ENCODE measurements at regions of chr19 and their contacts with region 1.

Region 1: GRCh38 chr19:3626473-3627350 is at the start of gene CACTIN:
- DNase-seq: peak; percentile 97 to 100 (median 99)
- ATAC-seq: peak; percentile 99
- H3K4me3 ChIP-seq: peak within 1 kb of the TSS; percentile 73
- H3K4me3 Mint-ChIP-seq: peak within 1 kb of the TSS; percentile 85 to 98 (median 94)
- H3K27ac ChIP-seq: peak within 1 kb of the TSS; percentile 81
- H3K27ac Mint-ChIP-seq: peak within 1 kb of the TSS; percentile 94 to 100 (median 99)
- H3K4me1 ChIP-seq: peaks cover 8 to 16% of the 10 kb centered on the region in 2 donors
- H3K4me1 Mint-ChIP-seq: peaks cover 23 to 43% (median 27%) of the 10 kb centered on the region in 7 donors
- H3K27me3 ChIP-seq: no peaks in the 10 kb centered on the region
- H3K27me3 Mint-ChIP-seq: no peaks in the 10 kb centered on the region
- total RNA-seq, gene CACTIN: 35.4 to 46.7 (median 37.1) TPM

Region 2: DNA sequence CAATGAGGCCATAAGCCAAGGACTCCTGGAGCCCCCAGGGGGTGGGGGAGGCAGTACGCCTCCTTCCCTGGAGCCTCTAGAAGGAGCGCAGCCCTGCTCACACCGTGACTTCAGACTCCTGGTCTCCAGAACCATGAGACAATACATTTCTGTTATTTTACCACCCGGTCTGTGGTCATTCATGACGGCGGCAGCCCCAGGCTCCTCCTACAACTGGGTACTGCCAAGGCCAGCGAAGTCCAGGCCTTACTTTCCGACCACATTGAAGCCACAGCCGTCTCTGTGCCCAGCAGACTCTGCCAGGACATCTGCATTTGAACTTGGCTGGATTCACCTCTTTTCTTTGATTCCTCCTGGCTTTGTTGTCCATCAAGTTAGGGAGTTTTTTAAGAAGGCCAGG is 934.8 kb before region 1 on chr19:
- CTCF ChIA-PET with region 1: no interaction called
- POLR2A ChIA-PET with region 1: no interaction called
- intact Hi-C with region 1: no loop called
- DNase-seq: no peak
- ATAC-seq: no peak
- H3K4me3 ChIP-seq: no peak overlapping the region
- H3K4me3 Mint-ChIP-seq: no peak overlapping the region
- H3K27ac ChIP-seq: no peak overlapping the region
- H3K27ac Mint-ChIP-seq: no peak overlapping the region
- H3K4me1 ChIP-seq: no peaks in the 10 kb centered on the region
- H3K4me1 Mint-ChIP-seq: peaks cover 0 to 11% (median 7%) of the 10 kb centered on the region in 7 donors
- H3K27me3 ChIP-seq: no peaks in the 10 kb centered on the region
- H3K27me3 Mint-ChIP-seq: no peaks in the 10 kb centered on the region

Region 3: DNA sequence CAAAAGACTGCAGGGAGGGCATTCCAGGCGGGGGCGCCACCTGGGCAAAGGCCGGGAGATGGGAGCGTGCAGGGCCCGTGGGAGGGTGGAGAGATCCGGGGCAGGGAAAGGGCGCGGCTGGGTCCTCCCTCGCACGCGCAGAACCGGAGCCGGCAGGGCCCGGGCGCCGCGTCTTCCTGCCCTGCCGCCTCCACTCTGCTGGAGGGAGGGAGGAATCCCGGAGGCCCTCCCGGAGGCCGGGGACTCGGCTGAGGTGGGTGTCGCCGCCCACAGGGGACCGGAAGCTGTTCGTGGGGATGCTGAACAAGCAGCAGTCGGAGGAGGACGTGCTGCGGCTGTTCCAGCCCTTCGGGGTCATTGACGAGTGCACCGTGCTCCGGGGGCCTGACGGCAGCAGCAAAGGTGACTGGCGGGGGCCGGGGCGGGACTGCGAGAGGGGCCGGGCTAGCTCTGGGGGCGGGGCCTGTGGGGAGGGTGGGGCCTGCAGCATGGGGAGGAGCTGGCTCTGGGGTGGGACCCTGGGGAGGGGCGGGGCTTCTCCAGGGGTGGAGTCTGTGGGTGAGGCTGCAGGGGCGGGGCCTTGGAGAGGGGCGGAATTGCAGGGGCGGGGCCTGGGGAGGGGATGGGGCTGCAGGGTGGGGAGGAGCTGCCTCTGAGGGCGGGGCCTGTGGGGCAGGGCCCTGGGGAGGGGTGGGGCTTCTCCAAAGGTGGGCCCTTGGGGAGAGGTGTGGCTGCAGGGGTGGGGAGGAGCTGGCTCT is 350.9 kb before region 1 on chr19:
- CTCF ChIA-PET with region 1: no interaction called
- POLR2A ChIA-PET with region 1: no interaction called
- intact Hi-C with region 1: loop called in 1 of 2 experiments (anchors 2 kb)
- DNase-seq: peak; percentile 78 to 96 (median 91)
- ATAC-seq: peak; percentile 89
- H3K4me3 ChIP-seq: peak overlapping the region; percentile 74
- H3K4me3 Mint-ChIP-seq: peak overlapping the region; percentile 82 to 92 (median 86)
- H3K27ac ChIP-seq: peak overlapping the region; percentile 62
- H3K27ac Mint-ChIP-seq: peak overlapping the region in 8 of 9 donors; percentile 32 to 89 (median 84)
- H3K4me1 ChIP-seq: peaks cover 8 to 16% of the 10 kb centered on the region in 2 donors
- H3K4me1 Mint-ChIP-seq: peaks cover 8 to 22% (median 14%) of the 10 kb centered on the region in 7 donors
- H3K27me3 ChIP-seq: no peaks in the 10 kb centered on the region
- H3K27me3 Mint-ChIP-seq: peaks cover 7 to 16% (median 12%) of the 10 kb centered on the region in 5 donors

Region 4: GRCh38 chr19:3500429-3501130 is 126.1 kb before region 1 on chr19 and contains the start of gene DOHH:
- CTCF ChIA-PET with region 1: no interaction called
- POLR2A ChIA-PET with region 1: no interaction called
- intact Hi-C with region 1: no loop called
- DNase-seq: peak; percentile 81 to 97 (median 94)
- ATAC-seq: peak; percentile 94
- H3K4me3 ChIP-seq: peak within 1 kb of the TSS; percentile 72
- H3K4me3 Mint-ChIP-seq: peak within 1 kb of the TSS; percentile 81 to 96 (median 93)
- H3K27ac ChIP-seq: peak within 1 kb of the TSS; percentile 82
- H3K27ac Mint-ChIP-seq: peak within 1 kb of the TSS; percentile 91 to 98 (median 96)
- H3K4me1 ChIP-seq: peaks cover 12 to 25% of the 10 kb centered on the region in 2 donors
- H3K4me1 Mint-ChIP-seq: peaks cover 13 to 41% (median 31%) of the 10 kb centered on the region in 7 donors
- H3K27me3 ChIP-seq: no peaks in the 10 kb centered on the region
- H3K27me3 Mint-ChIP-seq: peaks cover 0 to 5% (median 0%) of the 10 kb centered on the region in 5 donors
- total RNA-seq, gene DOHH: 4.4 to 16.4 (median 8.0) TPM

Region 5: DNA sequence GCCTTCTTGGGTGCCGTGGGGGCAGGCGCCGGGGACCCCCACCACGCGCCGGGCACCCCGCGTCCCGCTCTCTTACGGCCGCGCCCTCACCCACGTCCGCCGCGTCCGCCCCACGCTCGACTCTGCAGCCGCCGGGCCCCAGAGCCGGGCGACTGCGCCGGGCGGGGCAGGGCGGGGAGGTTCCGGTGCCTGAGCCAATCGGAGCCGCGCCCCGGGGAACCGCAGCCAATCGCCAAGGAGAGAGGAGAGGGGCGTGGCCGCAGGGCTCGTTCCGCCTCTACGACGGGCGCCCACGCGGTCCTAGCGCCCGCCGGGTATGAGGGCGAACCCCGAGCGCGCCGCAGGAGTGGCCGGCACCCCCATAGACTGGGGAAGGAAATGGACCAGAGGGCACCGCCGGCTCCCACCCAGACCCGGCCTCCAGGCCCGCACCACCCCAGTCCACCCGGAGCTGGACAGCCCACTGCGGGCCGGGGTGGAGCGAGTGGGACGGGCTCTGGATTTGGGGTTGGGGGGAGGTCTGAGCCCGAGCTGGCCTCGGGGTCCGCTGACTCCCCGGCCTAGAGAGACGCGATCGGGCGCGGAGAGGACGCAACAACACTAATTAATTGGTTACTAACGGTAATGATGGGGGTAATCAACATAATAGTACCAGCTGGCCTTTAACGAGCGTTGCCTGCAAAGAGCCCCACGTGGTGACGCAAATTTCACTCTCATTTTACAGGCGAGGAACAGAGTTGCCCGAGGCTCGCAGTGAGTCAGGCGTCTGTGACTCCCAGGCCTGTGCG is 69.1 kb before region 1 on chr19 and contains the start of gene MFSD12:
- CTCF ChIA-PET with region 1: no interaction called
- POLR2A ChIA-PET with region 1: interaction called, 4 read pairs
- intact Hi-C with region 1: loop called (anchors 1 kb)
- DNase-seq: peak; percentile 88 to 98 (median 93)
- ATAC-seq: peak; percentile 94
- H3K4me3 ChIP-seq: peak within 1 kb of the TSS; percentile 90
- H3K4me3 Mint-ChIP-seq: peak within 1 kb of the TSS; percentile 92 to 100 (median 96)
- H3K27ac ChIP-seq: peak within 1 kb of the TSS; percentile 83
- H3K27ac Mint-ChIP-seq: peak within 1 kb of the TSS; percentile 92 to 97 (median 95)
- H3K4me1 ChIP-seq: peaks cover 25 to 30% of the 10 kb centered on the region in 2 donors
- H3K4me1 Mint-ChIP-seq: peaks cover 18 to 40% (median 38%) of the 10 kb centered on the region in 7 donors
- H3K27me3 ChIP-seq: no peaks in the 10 kb centered on the region
- H3K27me3 Mint-ChIP-seq: no peaks in the 10 kb centered on the region
- total RNA-seq, gene MFSD12: 95.2 to 153 (median 101) TPM

Region 6: GRCh38 chr19:3586124-3586626 is 40.5 kb before region 1 on chr19:
- CTCF ChIA-PET with region 1: no interaction called
- POLR2A ChIA-PET with region 1: no interaction called
- intact Hi-C with region 1: loop called in 1 of 2 experiments (anchors 2 kb)
- DNase-seq: peak in 6 of 9 donors; percentile 26 to 59 (median 45)
- ATAC-seq: peak; percentile 51
- H3K4me3 ChIP-seq: peak overlapping the region; percentile 54
- H3K4me3 Mint-ChIP-seq: peak overlapping the region in 8 of 10 donors; percentile 27 to 74 (median 68)
- H3K27ac ChIP-seq: peak overlapping the region; percentile 31
- H3K27ac Mint-ChIP-seq: no peak overlapping the region
- H3K4me1 ChIP-seq: peaks cover 0 to 6% of the 10 kb centered on the region in 2 donors
- H3K4me1 Mint-ChIP-seq: no peaks in the 10 kb centered on the region
- H3K27me3 ChIP-seq: no peaks in the 10 kb centered on the region
- H3K27me3 Mint-ChIP-seq: peaks cover 0 to 6% (median 0%) of the 10 kb centered on the region in 5 donors

Region 7: DNA sequence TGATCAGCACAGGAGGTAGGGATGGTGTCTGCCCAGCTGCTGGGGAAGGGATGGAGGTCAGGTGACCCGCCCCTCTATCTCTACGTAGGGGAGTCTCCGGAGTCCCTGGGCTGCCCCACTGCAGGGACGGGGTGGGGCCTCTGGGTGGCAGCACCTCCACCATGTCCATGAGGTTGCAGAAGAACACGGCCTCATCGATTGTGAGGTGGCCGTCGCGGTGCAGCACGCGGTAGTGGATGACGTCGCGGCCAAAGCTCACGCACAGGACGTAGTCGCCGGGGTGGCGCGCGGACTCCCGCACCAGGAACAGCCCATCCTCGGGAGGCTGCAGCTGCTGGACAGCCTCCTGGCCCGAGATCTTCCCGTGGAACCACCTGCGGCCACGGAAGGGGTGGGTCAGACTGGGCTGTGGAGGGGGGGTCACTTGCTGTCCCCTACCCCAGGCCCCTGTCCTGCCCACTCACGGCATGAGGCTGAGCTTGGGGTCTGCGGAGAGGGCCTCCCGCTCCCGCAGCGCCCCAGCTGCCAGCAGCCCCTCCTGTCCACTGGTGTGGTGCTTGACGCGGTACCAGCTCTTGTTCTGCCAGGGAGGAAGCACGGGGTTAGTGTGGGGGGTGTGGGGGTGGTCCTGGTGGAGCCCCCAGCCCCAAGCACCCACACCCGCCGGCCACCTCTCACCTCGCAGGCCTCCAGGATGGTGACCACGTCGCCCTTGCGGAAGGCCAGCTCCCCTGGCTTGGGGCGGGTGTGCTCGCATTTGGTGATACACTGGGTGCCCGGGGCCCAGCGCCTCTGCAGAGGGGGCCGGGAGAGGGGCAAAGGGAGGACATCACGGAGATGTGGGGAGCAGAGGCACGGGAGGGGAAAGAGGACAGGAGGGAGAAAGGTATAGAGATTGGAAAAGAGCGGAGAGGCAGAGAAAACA is 157.2 kb after region 1 on chr19:
- CTCF ChIA-PET with region 1: no interaction called
- POLR2A ChIA-PET with region 1: no interaction called
- intact Hi-C with region 1: no loop called
- DNase-seq: peak in 5 of 9 donors; percentile 31 to 43 (median 38)
- ATAC-seq: peak; percentile 66
- H3K4me3 ChIP-seq: no peak overlapping the region
- H3K4me3 Mint-ChIP-seq: peak overlapping the region; percentile 23 to 88 (median 82)
- H3K27ac ChIP-seq: no peak overlapping the region
- H3K27ac Mint-ChIP-seq: peak overlapping the region in 1 of 9 donors; percentile 50
- H3K4me1 ChIP-seq: no peaks in the 10 kb centered on the region
- H3K4me1 Mint-ChIP-seq: peaks cover 0 to 18% (median 8%) of the 10 kb centered on the region in 7 donors
- H3K27me3 ChIP-seq: no peaks in the 10 kb centered on the region
- H3K27me3 Mint-ChIP-seq: peaks cover 0 to 18% (median 0%) of the 10 kb centered on the region in 5 donors

Region 8: GRCh38 chr19:4007021-4007835 is 380.5 kb after region 1 on chr19 and contains the start of gene PIAS4:
- CTCF ChIA-PET with region 1: no interaction called
- POLR2A ChIA-PET with region 1: no interaction called
- intact Hi-C with region 1: loop called in 1 of 2 experiments (anchors 1 kb)
- DNase-seq: peak; percentile 93 to 97 (median 96)
- ATAC-seq: peak; percentile 95
- H3K4me3 ChIP-seq: peak within 1 kb of the TSS; percentile 76
- H3K4me3 Mint-ChIP-seq: peak within 1 kb of the TSS; percentile 82 to 93 (median 88)
- H3K27ac ChIP-seq: peak within 1 kb of the TSS; percentile 75
- H3K27ac Mint-ChIP-seq: peak within 1 kb of the TSS; percentile 31 to 93 (median 85)
- H3K4me1 ChIP-seq: peaks cover 26 to 27% of the 10 kb centered on the region in 2 donors
- H3K4me1 Mint-ChIP-seq: peaks cover 13 to 33% (median 23%) of the 10 kb centered on the region in 7 donors
- H3K27me3 ChIP-seq: no peaks in the 10 kb centered on the region
- H3K27me3 Mint-ChIP-seq: no peaks in the 10 kb centered on the region
- total RNA-seq, gene PIAS4: 23.9 to 40.6 (median 28.8) TPM

Region 9: DNA sequence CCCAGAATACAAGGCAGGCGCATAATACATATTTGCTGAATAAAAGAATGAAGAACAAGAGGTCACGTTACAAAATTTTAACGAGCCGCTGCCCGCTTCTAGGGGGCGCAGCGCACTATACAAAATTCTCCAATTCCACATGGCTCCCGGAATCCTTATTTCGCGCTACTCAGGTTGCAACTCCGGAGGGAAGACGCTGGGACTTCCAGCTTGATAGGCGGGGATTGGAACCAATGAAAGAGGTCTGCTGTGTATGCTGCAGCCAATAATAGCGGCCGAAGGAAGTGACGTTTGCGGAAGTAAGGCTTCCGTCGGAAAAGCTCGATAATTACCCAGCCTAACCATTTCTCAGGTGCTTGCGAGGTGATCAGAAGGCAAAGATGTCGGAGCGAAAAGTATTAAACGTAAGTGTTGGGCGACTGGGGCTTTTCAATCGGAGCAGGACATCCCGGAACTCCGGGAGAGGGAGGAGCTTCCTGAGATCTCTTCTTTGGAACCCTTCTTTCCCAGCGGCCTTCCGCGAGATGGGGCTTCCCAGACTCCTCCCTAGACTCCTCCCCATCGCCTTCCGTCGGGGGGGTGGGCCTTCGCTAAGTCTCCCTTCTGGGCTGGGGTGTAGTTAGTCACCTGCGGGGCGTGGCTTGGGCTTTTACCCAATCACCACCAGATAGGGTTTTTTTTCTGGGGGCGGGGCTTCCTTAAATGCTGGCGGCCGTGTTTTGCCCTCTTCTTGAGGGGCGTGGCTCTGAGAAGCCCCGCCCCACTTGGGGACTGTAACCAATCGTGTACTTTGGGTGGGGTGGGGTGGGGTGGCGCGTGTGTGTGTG is 620.3 kb after region 1 on chr19 and contains the start of gene YJU2:
- CTCF ChIA-PET with region 1: no interaction called
- POLR2A ChIA-PET with region 1: no interaction called
- intact Hi-C with region 1: loop called in 1 of 2 experiments (anchors 1 kb)
- DNase-seq: peak; percentile 92 to 100 (median 99)
- ATAC-seq: peak; percentile 96
- H3K4me3 ChIP-seq: peak within 1 kb of the TSS; percentile 100
- H3K4me3 Mint-ChIP-seq: peak within 1 kb of the TSS; percentile 85 to 98 (median 96)
- H3K27ac ChIP-seq: peak within 1 kb of the TSS; percentile 99
- H3K27ac Mint-ChIP-seq: peak within 1 kb of the TSS; percentile 97 to 100 (median 99)
- H3K4me1 ChIP-seq: peaks cover 12 to 13% of the 10 kb centered on the region in 2 donors
- H3K4me1 Mint-ChIP-seq: peaks cover 10 to 33% (median 24%) of the 10 kb centered on the region in 7 donors
- H3K27me3 ChIP-seq: no peaks in the 10 kb centered on the region
- H3K27me3 Mint-ChIP-seq: peaks cover 0 to 2% (median 0%) of the 10 kb centered on the region in 5 donors
- total RNA-seq, gene YJU2: 28.5 to 42.1 (median 31.9) TPM